Heart left ventricle (tissue), 16 donors: ENCODE measurements at regions of chr10 and their contacts with region 1.

Region 1: GRCh38 chr10:69515699-69516259 is 57.4 kb downstream of the NEUROG3 start:
- DNase-seq: peak; percentile 50 to 83 (median 61)
- ATAC-seq: peak; percentile 48 to 88 (median 84)
- H3K4me3 ChIP-seq: no peak overlapping the region
- H3K27ac ChIP-seq: no peak overlapping the region
- H3K4me1 ChIP-seq: no peaks in the 10 kb centered on the region
- H3K27me3 ChIP-seq: peaks cover 0 to 4% (median 0%) of the 10 kb centered on the region in 9 donors
- CTCF ChIP-seq: peak; percentile 52 to 87 (median 64)
- POLR2A ChIP-seq: no peak

Region 2: GRCh38 chr10:69464801-69465401 is 50.9 kb before region 1 on chr10:
- intact Hi-C with region 1: no loop called
- DNase-seq: peak in 1 of 5 donors; percentile 70
- ATAC-seq: peak in 3 of 4 donors; percentile 11 to 61 (median 49)
- H3K4me3 ChIP-seq: no peak overlapping the region
- H3K27ac ChIP-seq: peak overlapping the region; percentile 54 to 92 (median 68)
- H3K4me1 ChIP-seq: peaks cover 5 to 94% (median 71%) of the 10 kb centered on the region in 12 donors
- H3K27me3 ChIP-seq: no peaks in the 10 kb centered on the region
- CTCF ChIP-seq: no peak
- POLR2A ChIP-seq: no peak

Region 3: GRCh38 chr10:69533658-69534057 is 17.9 kb after region 1 on chr10:
- intact Hi-C with region 1: loop called in 1 of 10 experiments (anchors 1 kb)
- DNase-seq: no peak
- ATAC-seq: no peak
- H3K4me3 ChIP-seq: no peak overlapping the region
- H3K27ac ChIP-seq: no peak overlapping the region
- H3K4me1 ChIP-seq: no peaks in the 10 kb centered on the region
- H3K27me3 ChIP-seq: peaks cover 0 to 3% (median 0%) of the 10 kb centered on the region in 9 donors
- CTCF ChIP-seq: no peak
- POLR2A ChIP-seq: no peak

Region 4: DNA sequence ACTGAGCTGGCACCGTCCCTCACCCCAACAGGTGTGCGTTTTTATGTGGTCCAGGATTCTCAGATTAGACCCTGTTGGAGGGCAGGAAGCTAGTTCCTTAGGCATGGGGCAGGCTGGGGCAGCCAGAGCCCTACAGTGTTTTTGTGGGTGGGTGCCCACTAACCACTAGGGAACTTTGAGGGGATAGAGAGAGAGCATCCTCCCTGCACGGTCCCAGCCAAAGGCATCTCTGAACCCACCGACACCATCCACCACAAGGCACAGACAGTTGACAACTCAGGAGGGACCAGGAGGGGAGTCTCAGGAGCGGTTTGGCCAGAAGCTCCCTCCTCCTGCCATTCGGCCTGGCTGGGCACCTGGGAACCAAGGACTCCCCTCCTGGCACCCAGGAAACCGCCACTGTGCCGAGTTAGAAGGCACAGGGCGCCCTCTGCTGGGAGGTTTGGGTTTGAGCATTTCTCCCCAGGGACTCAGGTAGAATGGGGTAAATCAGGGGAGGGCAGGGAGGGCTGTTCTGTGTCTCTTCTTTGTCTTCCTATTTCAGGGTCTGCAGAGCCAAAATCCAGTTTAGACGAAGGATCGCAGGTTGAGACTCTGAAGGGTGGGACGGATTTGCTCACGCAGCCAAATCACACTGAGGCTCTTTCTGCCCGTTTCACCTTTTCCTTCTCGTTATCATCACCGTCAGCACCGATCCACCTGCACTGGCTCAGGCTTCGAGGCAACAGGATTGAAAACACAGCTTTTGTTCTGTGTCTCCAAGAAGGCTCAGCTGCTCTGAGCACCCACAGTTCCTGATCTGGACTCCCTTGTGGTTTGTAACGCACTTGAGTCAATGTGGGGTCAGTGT is 201.2 kb after region 1 on chr10:
- intact Hi-C with region 1: loop called in 2 of 10 experiments (anchors 10 kb)
- DNase-seq: peak in 1 of 5 donors; percentile 58
- ATAC-seq: peak in 3 of 4 donors; percentile 38 to 50 (median 38)
- H3K4me3 ChIP-seq: no peak overlapping the region
- H3K27ac ChIP-seq: no peak overlapping the region
- H3K4me1 ChIP-seq: peaks cover 0 to 17% (median under 1%) of the 10 kb centered on the region in 12 donors
- H3K27me3 ChIP-seq: no peaks in the 10 kb centered on the region
- CTCF ChIP-seq: peak; percentile 44 to 68 (median 61)
- POLR2A ChIP-seq: no peak

Region 5: GRCh38 chr10:69831231-69831855 is 315.6 kb after region 1 on chr10:
- intact Hi-C with region 1: no loop called
- DNase-seq: no peak
- ATAC-seq: no peak
- H3K4me3 ChIP-seq: no peak overlapping the region
- H3K27ac ChIP-seq: no peak overlapping the region
- H3K4me1 ChIP-seq: peaks cover 0 to 3% (median 0%) of the 10 kb centered on the region in 12 donors
- H3K27me3 ChIP-seq: no peaks in the 10 kb centered on the region
- CTCF ChIP-seq: no peak
- POLR2A ChIP-seq: no peak